Activated CD4-positive, alpha-beta memory T cell treated with anti-CD3 and anti-CD28 coated beads for 36 hours (primary cell): ENCODE measurements at regions of chr19 and their contacts with region 1.

Region 1: DNA sequence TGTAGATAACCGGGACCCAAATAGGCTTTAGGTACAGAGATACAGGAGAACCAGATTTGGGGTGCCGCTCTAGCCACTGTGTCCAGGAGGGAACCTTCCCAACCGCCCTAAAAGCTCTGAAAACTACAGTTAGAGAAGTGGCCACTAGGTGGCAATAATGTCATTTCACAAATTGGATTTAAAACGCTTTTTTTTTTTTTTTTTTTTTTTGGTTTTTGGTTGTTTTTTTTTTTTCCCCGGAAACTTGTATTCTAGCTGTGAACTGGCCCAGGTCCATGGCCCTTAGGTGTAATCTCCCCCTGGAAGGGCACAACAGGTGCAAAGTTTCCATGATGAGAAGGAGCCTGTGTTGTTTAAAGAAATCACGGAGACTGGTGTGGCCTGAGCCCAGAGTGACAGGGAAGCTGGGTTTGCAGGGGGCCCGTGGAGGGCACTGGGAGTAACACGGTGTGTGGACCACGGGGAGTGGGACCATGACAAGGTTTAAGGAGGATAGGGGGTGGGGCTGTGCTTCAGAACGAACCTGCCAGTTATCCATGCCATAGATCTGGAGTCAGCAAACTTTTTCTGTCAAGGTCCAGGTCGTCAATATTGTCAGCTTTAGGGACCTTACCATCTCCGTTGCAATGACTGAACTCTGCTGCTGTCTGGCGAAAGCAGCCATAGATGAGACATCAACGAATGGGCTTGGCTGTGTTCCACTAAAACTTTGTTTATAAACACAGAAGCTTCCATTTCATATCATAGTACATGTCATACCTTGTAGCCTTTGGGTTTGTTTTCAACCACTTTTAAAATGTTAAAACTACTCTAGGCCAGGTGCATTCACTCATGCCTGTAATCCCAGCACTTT is 10.1 kb downstream of the OR1I1 start:
- DNase-seq: peak; percentile 32
- H3K4me3 Mint-ChIP-seq: no peak overlapping the region
- H3K27ac Mint-ChIP-seq: no peak overlapping the region
- H3K4me1 Mint-ChIP-seq: no peaks in the 10 kb centered on the region
- H3K27me3 Mint-ChIP-seq: peaks cover 11% of the 10 kb centered on the region

Region 2: GRCh38 chr19:15062036-15062435 is 30.1 kb before region 1 on chr19:
- CTCF ChIA-PET with region 1: no interaction called
- POLR2A ChIA-PET with region 1: no interaction called
- intact Hi-C with region 1: no loop called
- DNase-seq: no peak
- H3K4me3 Mint-ChIP-seq: no peak overlapping the region
- H3K27ac Mint-ChIP-seq: no peak overlapping the region
- H3K4me1 Mint-ChIP-seq: no peaks in the 10 kb centered on the region
- H3K27me3 Mint-ChIP-seq: peaks cover 39% of the 10 kb centered on the region

Region 3: GRCh38 chr19:15081911-15082310 is 10.2 kb before region 1 on chr19 and contains the start of gene OR1I1:
- CTCF ChIA-PET with region 1: interaction called, 14 read pairs
- POLR2A ChIA-PET with region 1: no interaction called
- intact Hi-C with region 1: no loop called
- DNase-seq: no peak
- H3K4me3 Mint-ChIP-seq: no peak within 1 kb of the TSS
- H3K27ac Mint-ChIP-seq: no peak within 1 kb of the TSS
- H3K4me1 Mint-ChIP-seq: no peaks in the 10 kb centered on the region
- H3K27me3 Mint-ChIP-seq: peaks cover 22% of the 10 kb centered on the region
- total RNA-seq, gene OR1I1: not detected

Region 4: GRCh38 chr19:15125232-15126067 is 33.3 kb after region 1 on chr19:
- CTCF ChIA-PET with region 1: interaction called, 12 read pairs
- POLR2A ChIA-PET with region 1: interaction called, 5 read pairs
- intact Hi-C with region 1: no loop called
- DNase-seq: peak; percentile 99
- H3K4me3 Mint-ChIP-seq: peak overlapping the region; percentile 100
- H3K27ac Mint-ChIP-seq: peak overlapping the region; percentile 99
- H3K4me1 Mint-ChIP-seq: peaks cover 30% of the 10 kb centered on the region
- H3K27me3 Mint-ChIP-seq: no peaks in the 10 kb centered on the region

Region 5: DNA sequence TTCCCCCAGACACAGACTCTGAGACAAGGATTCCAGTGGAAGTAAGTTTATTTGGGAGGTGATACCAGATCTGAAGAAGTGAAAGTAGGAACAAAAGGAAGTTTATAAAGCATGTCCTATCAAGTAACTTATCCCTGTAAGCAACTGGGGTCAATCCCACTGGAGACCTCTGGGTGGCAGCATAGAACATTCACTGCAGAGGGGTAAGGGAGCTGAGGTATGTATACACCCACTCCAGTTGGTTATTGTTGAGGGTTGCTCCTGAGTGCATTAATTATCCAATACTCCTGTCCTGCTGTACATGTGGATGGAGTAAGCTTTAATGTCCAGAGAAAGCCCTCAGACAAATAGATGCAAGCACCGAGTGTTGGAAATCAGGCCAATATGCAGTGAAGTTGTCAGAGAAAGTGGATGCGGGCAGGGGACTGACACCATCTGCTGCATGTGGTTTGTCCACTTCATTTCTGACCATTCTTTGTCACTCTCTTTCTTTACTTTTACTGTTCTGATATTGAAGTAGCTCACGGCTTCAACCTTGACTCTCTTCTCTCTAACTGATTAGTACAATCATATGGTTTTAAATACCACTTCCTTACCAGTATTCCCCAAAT is 62.0 kb after region 1 on chr19:
- CTCF ChIA-PET with region 1: interaction called, 92 read pairs
- POLR2A ChIA-PET with region 1: no interaction called
- intact Hi-C with region 1: loop called (anchors 2 kb)
- DNase-seq: peak; percentile 65
- H3K4me3 Mint-ChIP-seq: no peak overlapping the region
- H3K27ac Mint-ChIP-seq: no peak overlapping the region
- H3K4me1 Mint-ChIP-seq: peaks cover 2% of the 10 kb centered on the region
- H3K27me3 Mint-ChIP-seq: peaks cover 5% of the 10 kb centered on the region

Region 6: DNA sequence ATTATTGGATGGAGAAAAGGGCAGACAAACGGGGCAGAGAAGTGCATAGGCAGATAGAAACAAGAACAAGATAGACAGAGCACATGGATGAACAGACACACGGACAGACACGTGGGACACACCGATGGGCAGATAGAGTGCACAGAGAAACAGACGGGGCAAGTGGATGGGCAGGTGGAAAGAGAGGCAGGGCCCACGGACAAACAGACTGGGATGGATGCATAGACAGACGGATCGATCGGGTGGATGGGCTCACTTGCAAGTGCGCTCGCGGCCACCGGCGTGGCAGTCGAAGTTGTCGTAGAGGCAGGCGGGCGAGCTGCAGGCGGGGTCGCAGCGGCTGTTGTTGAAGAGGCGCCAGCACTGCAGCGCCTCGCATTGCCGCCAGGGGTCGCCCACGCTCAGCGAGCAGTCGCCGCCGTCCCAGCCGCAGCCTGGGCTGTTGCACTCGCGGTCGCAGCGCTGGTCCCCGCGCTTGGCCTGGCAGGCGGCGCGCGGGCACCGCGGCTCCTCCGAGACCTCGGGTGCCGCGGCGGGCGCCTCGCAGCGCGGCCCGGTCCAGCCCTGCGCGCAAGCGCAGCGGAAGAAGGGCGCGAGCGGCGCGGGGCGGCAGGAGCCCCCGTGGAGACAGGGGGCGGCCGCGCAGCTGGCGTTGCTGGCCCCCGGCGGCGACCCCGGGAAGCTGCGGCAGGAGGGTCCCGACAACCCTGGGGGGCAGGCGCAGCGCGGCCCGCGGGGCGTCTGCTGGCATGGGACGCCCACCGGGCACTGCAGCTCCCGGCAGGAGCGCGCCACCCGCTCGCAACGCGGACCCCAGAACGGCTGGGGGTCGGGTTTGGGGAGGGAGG is 85.4 kb after region 1 on chr19:
- CTCF ChIA-PET with region 1: interaction called, 13 read pairs
- POLR2A ChIA-PET with region 1: no interaction called
- intact Hi-C with region 1: no loop called
- DNase-seq: peak; percentile 87
- H3K4me3 Mint-ChIP-seq: no peak overlapping the region
- H3K27ac Mint-ChIP-seq: no peak overlapping the region
- H3K4me1 Mint-ChIP-seq: peaks cover 4% of the 10 kb centered on the region
- H3K27me3 Mint-ChIP-seq: peaks cover 4% of the 10 kb centered on the region